ENCODE measurements at regions of chr3 and their contacts with region 1.

Region 1: GRCh38 chr3:47802734-47803477 is at the start of gene DHX30:
- DNase-seq: peak; percentile 85
- H3K4me3 Mint-ChIP-seq: peak within 1 kb of the TSS; percentile 95
- H3K27ac Mint-ChIP-seq: peak within 1 kb of the TSS; percentile 94
- H3K4me1 Mint-ChIP-seq: peaks cover 29% of the 10 kb centered on the region
- H3K27me3 Mint-ChIP-seq: no peaks in the 10 kb centered on the region
- total RNA-seq, gene DHX30: 73.2 to 77.8 TPM

Region 2: GRCh38 chr3:47669026-47669749 is 133.7 kb before region 1 on chr3:
- CTCF ChIA-PET with region 1: no interaction called
- POLR2A ChIA-PET with region 1: interaction called, 13 read pairs
- DNase-seq: no peak
- H3K4me3 Mint-ChIP-seq: no peak overlapping the region
- H3K27ac Mint-ChIP-seq: peak overlapping the region; percentile 19
- H3K4me1 Mint-ChIP-seq: peaks cover 9% of the 10 kb centered on the region
- H3K27me3 Mint-ChIP-seq: no peaks in the 10 kb centered on the region